ENCODE measurements at regions of chr7 and their contacts with region 1.

Region 1: GRCh38 chr7:94529516-94529915 is 19.9 kb downstream of the CASD1 start:
- DNase-seq: no peak
- H3K4me3 ChIP-seq: no peak overlapping the region
- H3K27ac ChIP-seq: no peak overlapping the region
- H3K4me1 ChIP-seq: no peaks in the 10 kb centered on the region
- H3K27me3 ChIP-seq: no peaks in the 10 kb centered on the region
- CTCF ChIP-seq: no peak
- POLR2A ChIP-seq: no peak

Region 2: DNA sequence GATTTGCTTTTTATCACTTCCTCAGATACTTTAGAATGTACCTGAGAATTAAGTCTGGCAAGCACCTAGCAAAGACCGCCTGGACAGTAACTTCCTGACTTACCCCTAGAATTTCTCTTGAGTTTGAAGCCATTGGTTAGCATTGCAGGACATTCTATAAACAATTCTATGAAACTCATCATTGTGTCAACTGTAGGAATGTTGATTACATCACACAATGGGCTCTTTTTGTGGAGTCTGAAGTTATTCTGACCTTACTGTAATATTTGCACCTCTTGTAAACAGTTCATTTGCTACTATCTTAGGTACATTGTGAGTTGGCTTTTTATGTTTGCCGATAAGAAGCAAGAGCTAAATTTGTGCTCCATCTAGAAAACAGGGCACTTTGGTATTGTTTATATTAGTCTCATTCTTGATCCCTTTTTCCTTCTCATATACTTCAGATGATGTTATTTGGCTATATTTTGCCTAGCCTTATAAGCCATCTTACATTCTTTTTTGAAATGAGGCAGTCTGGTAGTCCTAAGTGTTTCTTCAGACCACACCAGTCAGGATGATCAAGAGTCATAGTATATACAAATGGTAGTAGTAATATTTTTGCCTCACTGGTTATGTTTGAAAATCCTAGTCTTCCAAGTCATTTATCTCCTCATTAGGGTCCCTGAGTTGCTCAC is 32.5 kb after region 1 on chr7:
- CTCF ChIA-PET with region 1: no interaction called
- POLR2A ChIA-PET with region 1: no interaction called
- dilution Hi-C with region 1: no loop called
- intact Hi-C with region 1: no loop called
- DNase-seq: peak; percentile 22
- H3K4me3 ChIP-seq: no peak overlapping the region
- H3K27ac ChIP-seq: no peak overlapping the region
- H3K4me1 ChIP-seq: peaks cover 5% of the 10 kb centered on the region
- H3K27me3 ChIP-seq: no peaks in the 10 kb centered on the region
- CTCF ChIP-seq: no peak
- POLR2A ChIP-seq: no peak

Region 3: GRCh38 chr7:94580596-94580995 is 51.1 kb after region 1 on chr7:
- CTCF ChIA-PET with region 1: no interaction called
- POLR2A ChIA-PET with region 1: no interaction called
- dilution Hi-C with region 1: no loop called
- intact Hi-C with region 1: loop called (anchors 10 kb)
- DNase-seq: no peak
- H3K4me3 ChIP-seq: no peak overlapping the region
- H3K27ac ChIP-seq: no peak overlapping the region
- H3K4me1 ChIP-seq: no peaks in the 10 kb centered on the region
- H3K27me3 ChIP-seq: no peaks in the 10 kb centered on the region
- CTCF ChIP-seq: no peak
- POLR2A ChIP-seq: no peak

Region 4: GRCh38 chr7:94618126-94618525 is 88.6 kb after region 1 on chr7:
- CTCF ChIA-PET with region 1: no interaction called
- POLR2A ChIA-PET with region 1: no interaction called
- dilution Hi-C with region 1: no loop called
- intact Hi-C with region 1: no loop called
- DNase-seq: no peak
- H3K4me3 ChIP-seq: no peak overlapping the region
- H3K27ac ChIP-seq: no peak overlapping the region
- H3K4me1 ChIP-seq: peaks cover 5% of the 10 kb centered on the region
- H3K27me3 ChIP-seq: no peaks in the 10 kb centered on the region
- CTCF ChIP-seq: no peak
- POLR2A ChIP-seq: no peak

Region 5: DNA sequence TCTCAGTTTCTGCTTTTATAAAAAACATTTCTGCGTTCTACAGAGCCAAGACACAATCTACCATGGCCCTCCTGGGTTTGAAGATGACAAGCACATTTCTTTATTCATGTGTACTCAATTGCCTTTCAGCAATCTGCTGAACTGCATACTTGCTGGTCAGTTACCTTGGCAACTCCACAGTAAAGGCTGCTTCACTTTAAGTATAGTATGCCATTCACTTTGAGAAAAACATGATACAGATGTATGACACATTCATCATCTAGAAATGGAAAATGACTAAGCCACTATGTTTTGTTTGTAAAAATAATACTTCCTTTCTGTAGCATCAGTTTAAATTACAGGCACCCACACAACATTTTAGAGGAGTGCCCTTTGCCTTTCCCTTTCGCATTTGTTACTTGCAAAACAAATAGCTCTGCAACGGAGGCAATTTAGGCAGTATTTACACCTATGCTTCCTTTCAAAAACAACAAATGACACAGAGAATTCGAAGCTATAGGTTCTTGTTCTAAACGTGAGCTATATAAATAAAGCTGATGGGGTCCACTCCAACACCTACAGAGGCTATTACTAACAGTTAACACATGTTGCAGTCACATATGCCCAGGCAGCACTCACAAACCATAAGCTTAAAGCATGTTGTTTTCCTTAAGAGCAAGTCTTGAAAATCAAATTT is 103.0 kb after region 1 on chr7:
- CTCF ChIA-PET with region 1: no interaction called
- POLR2A ChIA-PET with region 1: no interaction called
- dilution Hi-C with region 1: no loop called
- intact Hi-C with region 1: loop called (anchors 5 kb)
- DNase-seq: peak; percentile 84
- H3K4me3 ChIP-seq: no peak overlapping the region
- H3K27ac ChIP-seq: peak overlapping the region; percentile 51
- H3K4me1 ChIP-seq: peaks cover 11% of the 10 kb centered on the region
- H3K27me3 ChIP-seq: no peaks in the 10 kb centered on the region
- CTCF ChIP-seq: no peak
- POLR2A ChIP-seq: no peak